WTC11 (cell line): ENCODE measurements at regions of chr3 and their contacts with region 1.

Region 1: DNA sequence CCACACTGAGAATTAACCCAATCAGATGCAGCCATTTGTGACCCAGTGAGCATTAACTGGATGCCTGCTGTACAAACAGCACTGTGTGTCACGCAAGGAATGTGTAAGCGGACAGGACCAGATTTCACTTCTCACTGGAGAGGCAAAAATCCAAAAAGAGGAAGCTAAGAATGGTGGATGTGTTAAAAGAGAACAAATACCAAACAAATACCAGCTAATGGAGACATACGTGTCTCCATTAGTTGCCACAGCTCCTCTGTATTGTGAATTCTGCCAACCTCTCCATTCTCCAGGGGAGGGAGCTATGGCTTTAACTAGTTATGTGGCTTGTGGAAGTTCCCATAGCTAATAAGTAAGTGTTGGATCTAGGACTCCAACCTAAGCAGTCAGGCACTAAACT is 2.6 kb downstream of the LTF start:
- DNase-seq: no peak
- ATAC-seq: peak; percentile 63
- H3K4me3 Mint-ChIP-seq: no peak overlapping the region
- H3K27ac Mint-ChIP-seq: no peak overlapping the region
- H3K4me1 Mint-ChIP-seq: peaks cover 3% of the 10 kb centered on the region
- H3K27me3 Mint-ChIP-seq: peaks cover 42% of the 10 kb centered on the region
- CTCF ChIP-seq: no peak

Region 2: DNA sequence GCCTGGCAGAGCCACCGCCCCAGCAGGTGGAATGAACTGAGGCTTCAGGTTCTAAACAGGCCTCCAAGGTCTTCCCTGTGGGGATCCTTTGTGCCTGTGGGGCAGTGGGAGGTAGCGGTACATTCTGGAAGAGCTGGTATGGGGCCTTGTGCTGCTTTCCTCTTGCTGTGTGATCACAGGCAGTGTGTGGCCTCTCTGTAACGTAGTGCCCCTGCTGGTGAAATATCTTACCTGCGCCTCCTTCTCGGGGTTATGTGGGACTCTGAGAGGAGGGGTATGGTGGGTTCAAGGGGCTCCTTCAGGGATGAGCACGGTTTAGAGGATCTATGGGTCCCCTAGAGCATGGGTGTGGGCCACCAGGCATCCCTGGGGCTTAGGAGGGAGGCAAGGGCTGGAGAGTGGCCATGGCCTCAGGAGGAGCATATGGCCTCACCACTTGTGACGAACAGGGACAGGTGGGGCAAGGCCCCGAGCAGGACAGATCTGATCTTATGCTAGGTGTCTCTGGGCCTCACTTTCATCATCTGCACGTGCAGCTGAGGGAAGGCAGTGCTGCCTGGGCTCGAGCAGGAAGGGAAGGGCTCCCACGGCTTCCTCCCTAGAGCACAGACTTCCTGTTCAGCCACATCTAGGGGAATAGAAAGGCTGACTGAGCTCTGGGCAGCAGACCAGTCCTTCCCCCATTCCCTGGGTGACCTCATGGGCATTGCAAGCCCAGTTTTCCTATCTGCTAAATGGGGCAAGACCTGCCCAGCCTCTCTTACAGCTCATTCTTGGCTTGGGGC is 233.3 kb after region 1 on chr3:
- CTCF ChIA-PET with region 1: interaction called, 20 read pairs
- POLR2A ChIA-PET with region 1: no interaction called
- DNase-seq: peak; percentile 69
- ATAC-seq: peak; percentile 67
- H3K4me3 Mint-ChIP-seq: no peak overlapping the region
- H3K27ac Mint-ChIP-seq: no peak overlapping the region; the same call in 1 of the 2 replicates
- H3K4me1 Mint-ChIP-seq: peaks cover 22% of the 10 kb centered on the region
- H3K27me3 Mint-ChIP-seq: peaks cover 26% of the 10 kb centered on the region
- CTCF ChIP-seq: peak; percentile 44; the same call in 1 of the 2 replicates